ENCODE measurements at regions of chr12 and their contacts with region 1.

Region 1: DNA sequence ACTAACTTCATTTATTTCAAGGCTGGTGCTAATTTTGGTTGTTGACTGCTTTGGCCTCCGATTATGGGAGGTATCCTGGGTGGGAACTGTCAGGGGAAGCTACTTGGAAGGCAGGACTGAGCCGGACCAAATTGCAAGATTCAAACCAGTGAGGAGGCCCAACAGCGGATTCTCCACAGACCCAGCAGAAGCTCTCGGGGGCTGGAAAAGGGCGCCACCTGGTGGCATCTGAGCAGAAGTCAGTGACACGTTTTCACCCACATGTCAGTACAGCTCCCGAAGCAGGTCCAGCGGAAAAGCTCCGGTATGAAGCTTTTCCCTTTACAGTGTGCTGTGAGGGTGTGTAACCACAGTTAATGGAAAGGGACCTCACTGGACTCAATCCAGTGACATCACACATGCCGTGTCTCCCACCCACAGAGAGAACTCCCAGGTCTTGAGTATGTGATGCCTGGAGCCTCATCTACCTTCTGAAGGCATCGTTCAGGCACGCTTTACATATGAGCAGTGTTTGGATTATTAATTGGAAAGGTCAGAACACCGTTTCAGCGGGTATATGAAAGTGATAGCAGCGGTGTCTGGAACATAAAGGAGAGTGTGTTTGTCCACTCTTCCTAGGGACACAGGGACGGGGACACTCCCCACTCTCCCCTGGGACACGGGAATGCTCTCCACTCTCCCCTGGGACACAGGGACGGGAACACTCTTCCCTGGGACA is 3.6 kb upstream of the P2RX2 start:
- DNase-seq: peak; percentile 71 to 76 (median 75)
- H3K4me3 ChIP-seq: no peak overlapping the region
- H3K4me3 Mint-ChIP-seq: peak overlapping the region in 1 of 8 donors; percentile 35
- H3K27ac ChIP-seq: no peak overlapping the region
- H3K27ac Mint-ChIP-seq: peak overlapping the region in 1 of 7 donors; percentile 4
- H3K4me1 ChIP-seq: no peaks in the 10 kb centered on the region
- H3K4me1 Mint-ChIP-seq: peaks cover 7 to 24% (median 13%) of the 10 kb centered on the region in 4 donors
- H3K27me3 ChIP-seq: peaks cover 23% of the 10 kb centered on the region
- H3K27me3 Mint-ChIP-seq: peaks cover 27% of the 10 kb centered on the region in 2 donors

Region 2: DNA sequence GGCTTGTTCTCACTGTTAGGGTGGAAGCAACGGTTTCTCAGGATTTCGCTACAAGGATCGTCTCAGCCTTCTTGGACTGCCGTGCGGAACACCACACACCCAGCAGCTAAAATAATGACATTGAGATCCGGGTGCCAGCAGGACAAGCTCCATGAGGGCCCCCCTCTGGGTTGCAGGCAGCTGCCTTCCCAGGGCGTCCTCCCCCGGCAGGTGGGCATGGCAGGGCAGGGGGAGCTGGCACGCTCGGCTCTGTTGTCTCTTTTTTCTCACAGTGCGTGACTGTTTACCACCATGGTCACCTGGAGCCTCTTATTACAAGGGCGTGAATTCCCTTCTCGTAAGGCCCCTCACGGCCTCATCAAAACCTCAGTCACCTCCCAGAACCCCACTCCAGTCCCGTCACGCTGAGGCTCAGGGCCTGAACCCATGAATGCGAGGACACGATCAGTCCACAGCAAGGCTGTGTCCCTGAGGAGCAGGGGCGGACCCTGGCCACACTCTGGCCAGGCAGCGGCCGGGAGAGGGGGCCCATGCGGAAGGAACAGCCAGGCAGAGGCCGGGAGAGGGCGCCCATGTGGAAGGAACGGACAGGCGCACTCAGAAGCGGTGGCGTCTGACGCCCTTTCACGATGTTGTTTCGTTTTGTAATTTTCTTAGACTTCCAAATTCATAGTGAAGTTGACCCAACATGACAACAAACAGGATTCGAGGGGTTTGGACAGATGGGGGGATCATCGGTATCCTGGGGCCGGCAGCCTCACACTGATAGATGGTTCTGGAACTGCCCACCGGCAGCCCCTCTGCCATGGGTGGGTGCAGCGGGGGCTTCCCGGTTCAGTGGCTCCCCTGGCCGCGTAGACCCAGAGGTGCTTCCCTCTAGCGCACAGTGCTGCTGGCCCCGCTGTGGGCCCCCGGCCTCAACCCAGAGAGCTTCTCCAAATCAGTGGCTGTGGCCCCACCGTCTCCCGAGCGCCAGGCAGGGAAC is 14.7 kb before region 1 on chr12:
- CTCF ChIA-PET with region 1: interaction called, 6 read pairs
- POLR2A ChIA-PET with region 1: no interaction called
- intact Hi-C with region 1: loop called (anchors 2 kb)
- DNase-seq: peak in 4 of 5 donors; percentile 26 to 36 (median 31)
- H3K4me3 ChIP-seq: peak overlapping the region in 1 of 2 donors; percentile 10
- H3K4me3 Mint-ChIP-seq: peak overlapping the region; percentile 74 to 90 (median 84)
- H3K27ac ChIP-seq: no peak overlapping the region
- H3K27ac Mint-ChIP-seq: peak overlapping the region in 4 of 7 donors; percentile 43 to 62 (median 52)
- H3K4me1 ChIP-seq: peaks cover 11% of the 10 kb centered on the region
- H3K4me1 Mint-ChIP-seq: peaks cover 11 to 37% (median 28%) of the 10 kb centered on the region in 4 donors
- H3K27me3 ChIP-seq: peaks cover 5% of the 10 kb centered on the region
- H3K27me3 Mint-ChIP-seq: peaks cover 23 to 34% of the 10 kb centered on the region in 2 donors

Region 3: DNA sequence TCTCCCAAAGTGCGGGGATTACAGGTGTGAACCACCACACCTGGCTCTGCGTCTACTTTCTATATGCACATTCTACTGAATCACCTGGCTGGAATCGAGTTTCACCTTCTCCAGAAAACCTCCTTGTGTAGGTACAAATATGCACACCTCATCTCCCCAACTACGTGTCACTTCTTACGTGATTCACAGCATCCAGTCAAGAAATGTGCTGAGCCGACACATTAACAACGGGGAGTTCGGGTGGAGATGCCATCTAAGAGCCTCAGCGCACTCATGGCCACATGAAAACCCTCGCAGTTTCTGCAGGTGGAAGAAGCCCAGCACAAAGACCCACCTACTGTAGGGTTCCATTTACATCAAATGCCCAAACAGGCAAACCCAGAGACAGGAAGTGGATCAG is 32.8 kb after region 1 on chr12:
- CTCF ChIA-PET with region 1: no interaction called
- POLR2A ChIA-PET with region 1: no interaction called
- intact Hi-C with region 1: no loop called
- DNase-seq: no peak
- H3K4me3 ChIP-seq: no peak overlapping the region
- H3K4me3 Mint-ChIP-seq: no peak overlapping the region
- H3K27ac ChIP-seq: no peak overlapping the region
- H3K27ac Mint-ChIP-seq: peak overlapping the region in 3 of 7 donors; percentile 12 to 42 (median 15)
- H3K4me1 ChIP-seq: no peaks in the 10 kb centered on the region
- H3K4me1 Mint-ChIP-seq: no peaks in the 10 kb centered on the region
- H3K27me3 ChIP-seq: no peaks in the 10 kb centered on the region
- H3K27me3 Mint-ChIP-seq: no peaks in the 10 kb centered on the region

Measured in CD4-positive, alpha-beta memory T cell (primary cell).